Sciatic nerve (tissue), 2 donors: ENCODE measurements at regions of chr14 and their contacts with region 1.

Region 1: DNA sequence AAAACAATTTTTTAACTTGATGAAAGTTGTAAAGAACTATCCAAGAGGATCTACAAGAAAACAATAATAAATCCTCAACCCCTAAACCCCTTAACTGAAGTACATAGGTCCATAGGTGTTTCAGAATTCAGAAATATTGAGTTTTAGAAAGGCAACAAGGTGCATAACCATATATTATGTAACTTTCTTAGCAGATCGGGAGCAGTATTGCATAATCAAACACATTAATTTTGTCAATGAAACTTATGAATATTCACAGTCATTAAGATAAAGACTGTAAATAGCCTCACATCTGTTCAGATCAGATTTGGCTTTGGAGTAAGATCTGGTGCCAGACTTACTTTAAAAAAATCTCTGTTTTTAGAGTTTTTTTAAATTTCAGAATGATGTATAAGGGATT is 647.1 kb upstream of the FLRT2 start:
- DNase-seq: no peak
- ATAC-seq: no peak

Region 2: DNA sequence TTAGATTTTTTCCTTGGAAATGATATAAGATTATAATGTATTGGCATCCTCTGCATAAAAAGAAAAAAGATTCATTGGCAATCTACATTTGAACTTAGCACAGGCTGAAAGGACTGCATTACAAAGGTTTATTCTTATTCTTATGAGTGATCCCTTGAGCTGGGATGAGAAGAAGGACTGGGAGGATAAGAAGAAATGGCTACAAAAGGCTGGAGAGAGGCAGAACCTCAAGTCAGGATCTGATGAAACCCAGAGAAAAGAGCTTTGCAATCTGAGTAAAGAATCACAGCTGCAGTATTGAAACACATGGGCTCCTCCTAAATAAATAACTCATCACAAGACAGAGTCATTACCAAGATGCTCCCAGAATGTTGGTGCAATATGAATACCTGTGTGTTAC is 988.3 kb before region 1 on chr14:
- intact Hi-C with region 1: loop called (anchors 10 kb)
- DNase-seq: no peak
- ATAC-seq: no peak

Region 3: DNA sequence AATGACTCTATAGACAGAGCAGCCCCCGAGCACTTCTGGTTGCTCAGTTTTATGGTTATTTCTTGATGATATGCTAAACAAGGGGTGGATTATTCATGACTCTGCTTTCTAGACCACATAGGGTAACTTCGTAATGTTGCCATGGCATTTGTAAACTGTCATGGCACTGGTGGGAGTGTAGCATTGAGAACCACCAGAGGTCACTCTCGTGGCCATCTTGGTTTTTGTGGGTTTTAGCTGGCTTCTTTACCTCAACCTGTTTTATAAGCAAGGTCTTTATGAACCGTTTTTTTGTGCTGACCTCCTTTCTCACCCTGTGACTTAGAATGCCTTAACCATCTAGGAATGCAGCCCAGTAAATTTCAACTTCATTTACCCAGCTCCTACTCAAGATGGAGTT is 389.1 kb before region 1 on chr14:
- intact Hi-C with region 1: no loop called
- DNase-seq: no peak
- ATAC-seq: no peak

Region 4: GRCh38 chr14:85024931-85025330 is 142.1 kb after region 1 on chr14:
- intact Hi-C with region 1: no loop called
- DNase-seq: no peak
- ATAC-seq: no peak